Endothelial cell of umbilical vein (primary cell): ENCODE measurements at regions of chr4 and their contacts with region 1.

Region 1: GRCh38 chr4:41214136-41214824 is at the start of gene APBB2:
- DNase-seq: peak; percentile 98
- H3K4me3 ChIP-seq: peak within 1 kb of the TSS; percentile 85 to 96 (median 86)
- H3K27ac ChIP-seq: peak within 1 kb of the TSS; percentile 49
- H3K4me1 ChIP-seq: peaks cover 38% of the 10 kb centered on the region
- H3K27me3 ChIP-seq: no peaks in the 10 kb centered on the region
- CTCF ChIP-seq: peak; percentile 52 to 83
- POLR2A ChIP-seq: peak; percentile 93
- total RNA-seq, gene APBB2: 124 and 162 TPM in 2 replicates

Region 2: GRCh38 chr4:40924096-40924792 is 290.0 kb before region 1 on chr4:
- CTCF ChIA-PET with region 1: interaction called, 76 read pairs
- POLR2A ChIA-PET with region 1: no interaction called
- dilution Hi-C with region 1: loop called (anchors 25 kb)
- intact Hi-C with region 1: loop called (anchors 1 kb)
- DNase-seq: peak; percentile 68
- H3K4me3 ChIP-seq: no peak overlapping the region
- H3K27ac ChIP-seq: no peak overlapping the region
- H3K4me1 ChIP-seq: no peaks in the 10 kb centered on the region
- H3K27me3 ChIP-seq: no peaks in the 10 kb centered on the region
- CTCF ChIP-seq: peak; percentile 90 to 94
- POLR2A ChIP-seq: no peak

Region 3: GRCh38 chr4:40976343-40976742 is 237.9 kb before region 1 on chr4:
- CTCF ChIA-PET with region 1: interaction called, 179 read pairs
- POLR2A ChIA-PET with region 1: no interaction called
- dilution Hi-C with region 1: no loop called
- intact Hi-C with region 1: loop called (anchors 1 kb)
- DNase-seq: peak; percentile 76
- H3K4me3 ChIP-seq: no peak overlapping the region
- H3K27ac ChIP-seq: peak overlapping the region; percentile 5
- H3K4me1 ChIP-seq: peaks cover 8% of the 10 kb centered on the region
- H3K27me3 ChIP-seq: no peaks in the 10 kb centered on the region
- CTCF ChIP-seq: peak; percentile 37 to 44
- POLR2A ChIP-seq: no peak

Region 4: GRCh38 chr4:41050866-41051775 is 163.2 kb before region 1 on chr4:
- CTCF ChIA-PET with region 1: interaction called, 3 read pairs
- POLR2A ChIA-PET with region 1: no interaction called
- dilution Hi-C with region 1: no loop called
- intact Hi-C with region 1: loop called (anchors 5 kb)
- DNase-seq: peak; percentile 53
- H3K4me3 ChIP-seq: no peak overlapping the region
- H3K27ac ChIP-seq: peak overlapping the region; percentile 49
- H3K4me1 ChIP-seq: peaks cover 20% of the 10 kb centered on the region
- H3K27me3 ChIP-seq: no peaks in the 10 kb centered on the region
- CTCF ChIP-seq: no peak
- POLR2A ChIP-seq: no peak

Region 5: DNA sequence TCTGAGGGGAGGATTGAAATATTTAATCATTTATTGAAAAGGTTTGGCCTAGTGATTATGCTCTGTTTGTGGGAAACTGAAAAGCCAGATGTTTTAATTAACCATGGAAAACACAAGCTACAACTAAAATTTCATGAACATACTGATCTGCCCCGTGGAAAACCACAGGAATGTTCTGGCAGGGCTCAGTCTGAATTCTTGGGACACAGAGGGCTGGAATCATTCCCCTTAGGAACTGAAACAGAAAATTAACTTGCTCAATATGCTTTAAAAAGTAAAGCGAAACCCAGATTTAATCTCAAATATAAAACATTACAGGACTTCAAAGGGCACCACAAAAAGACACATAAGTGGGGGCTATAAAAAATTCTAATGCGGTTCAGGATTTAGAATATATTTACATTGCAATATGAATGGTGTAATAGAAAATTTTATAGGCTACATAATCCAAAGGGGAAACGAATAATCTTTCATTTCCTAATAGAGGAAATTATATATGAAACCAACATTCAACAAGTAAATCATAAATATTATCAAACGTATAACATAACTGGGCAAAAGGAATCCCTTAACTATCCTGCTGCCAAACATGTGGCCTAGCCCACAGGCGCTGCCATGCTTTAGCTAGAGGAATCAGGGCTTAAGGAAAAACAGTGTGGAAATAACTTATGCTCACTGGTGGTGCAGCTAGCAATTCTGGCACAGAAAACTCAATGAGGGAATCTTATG is 70.8 kb before region 1 on chr4:
- CTCF ChIA-PET with region 1: interaction called, 12 read pairs
- POLR2A ChIA-PET with region 1: no interaction called
- dilution Hi-C with region 1: no loop called
- intact Hi-C with region 1: loop called (anchors 2 kb)
- DNase-seq: peak; percentile 62
- H3K4me3 ChIP-seq: no peak overlapping the region
- H3K27ac ChIP-seq: peak overlapping the region; percentile 87
- H3K4me1 ChIP-seq: peaks cover 59% of the 10 kb centered on the region
- H3K27me3 ChIP-seq: no peaks in the 10 kb centered on the region
- CTCF ChIP-seq: no peak
- POLR2A ChIP-seq: no peak

Region 6: DNA sequence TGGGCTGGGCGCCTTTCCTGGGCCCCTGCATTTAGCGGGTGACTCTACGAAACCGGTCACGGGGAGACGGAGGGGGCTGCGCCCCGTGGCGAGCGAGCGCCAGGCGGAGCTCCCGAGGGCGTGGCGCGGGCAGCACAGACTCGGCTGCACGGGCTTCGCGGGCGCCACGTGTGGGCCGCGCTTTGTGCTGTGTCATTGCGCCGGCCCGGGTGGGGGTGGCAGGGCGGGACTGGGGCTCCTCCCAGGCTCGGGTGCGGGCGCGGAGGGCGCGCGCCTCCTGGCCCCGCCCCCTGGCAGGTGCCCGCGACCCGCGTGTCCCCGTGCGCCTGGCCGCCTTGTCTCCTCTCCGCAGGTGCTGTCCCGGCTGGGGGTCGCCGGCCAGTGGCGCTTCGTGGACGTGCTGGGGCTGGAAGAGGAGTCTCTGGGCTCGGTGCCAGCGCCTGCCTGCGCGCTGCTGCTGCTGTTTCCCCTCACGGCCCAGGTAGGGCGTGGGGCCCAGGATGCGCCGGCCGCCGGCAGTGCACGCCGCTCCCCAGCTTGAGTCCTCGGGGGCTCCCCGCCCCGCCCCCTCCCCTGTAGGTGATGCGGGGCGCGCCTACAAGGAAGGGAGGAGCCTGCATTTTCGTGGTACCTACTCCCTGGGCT is 43.1 kb after region 1 on chr4:
- CTCF ChIA-PET with region 1: interaction called, 4 read pairs
- POLR2A ChIA-PET with region 1: interaction called, 6 read pairs
- dilution Hi-C with region 1: no loop called
- intact Hi-C with region 1: loop called (anchors 5 kb)
- DNase-seq: peak; percentile 36
- H3K4me3 ChIP-seq: peak overlapping the region; percentile 35 to 54 (median 48)
- H3K27ac ChIP-seq: peak overlapping the region; percentile 0
- H3K4me1 ChIP-seq: peaks cover 12% of the 10 kb centered on the region
- H3K27me3 ChIP-seq: peaks cover 14 to 15% of the 10 kb centered on the region in 2 experiments
- CTCF ChIP-seq: no peak
- POLR2A ChIP-seq: no peak

Region 7: GRCh38 chr4:41281038-41281634 is 66.9 kb after region 1 on chr4:
- CTCF ChIA-PET with region 1: no interaction called
- POLR2A ChIA-PET with region 1: no interaction called
- dilution Hi-C with region 1: no loop called
- intact Hi-C with region 1: no loop called
- DNase-seq: peak; percentile 87
- H3K4me3 ChIP-seq: no peak overlapping the region
- H3K27ac ChIP-seq: no peak overlapping the region
- H3K4me1 ChIP-seq: no peaks in the 10 kb centered on the region
- H3K27me3 ChIP-seq: peaks cover 0 to 1% of the 10 kb centered on the region in 2 experiments
- CTCF ChIP-seq: peak; percentile 53 to 77
- POLR2A ChIP-seq: no peak

Region 8: GRCh38 chr4:41339812-41340809 is 125.8 kb after region 1 on chr4:
- CTCF ChIA-PET with region 1: no interaction called
- POLR2A ChIA-PET with region 1: no interaction called
- dilution Hi-C with region 1: no loop called
- intact Hi-C with region 1: no loop called
- DNase-seq: peak; percentile 85
- H3K4me3 ChIP-seq: no peak overlapping the region
- H3K27ac ChIP-seq: no peak overlapping the region
- H3K4me1 ChIP-seq: no peaks in the 10 kb centered on the region
- H3K27me3 ChIP-seq: no peaks in the 10 kb centered on the region
- CTCF ChIP-seq: peak in 1 of 2 donors; percentile 17
- POLR2A ChIP-seq: no peak

Region 9: DNA sequence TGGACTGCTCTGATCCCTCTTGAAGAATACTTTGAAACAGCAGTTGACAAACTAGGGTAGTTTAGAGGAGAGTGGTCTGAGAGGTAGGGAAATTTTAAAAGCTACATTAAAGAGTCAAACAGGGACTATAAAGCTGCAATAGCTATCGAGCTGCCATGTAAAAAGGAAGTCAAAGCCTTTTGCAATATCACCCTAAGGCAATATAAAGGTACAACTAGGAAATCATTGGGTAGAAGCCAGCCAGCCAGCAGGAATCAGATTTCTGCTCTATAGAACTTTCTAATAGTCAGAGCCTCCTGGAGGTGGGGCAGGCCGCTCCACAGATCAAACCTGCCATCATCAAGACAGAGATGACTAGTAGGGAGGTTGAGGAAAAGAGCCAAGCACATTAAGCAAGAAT is 549.4 kb after region 1 on chr4:
- CTCF ChIA-PET with region 1: no interaction called
- POLR2A ChIA-PET with region 1: no interaction called
- dilution Hi-C with region 1: no loop called
- intact Hi-C with region 1: no loop called
- DNase-seq: no peak
- H3K4me3 ChIP-seq: no peak overlapping the region
- H3K27ac ChIP-seq: no peak overlapping the region
- H3K4me1 ChIP-seq: no peaks in the 10 kb centered on the region
- H3K27me3 ChIP-seq: peaks cover 18 to 30% of the 10 kb centered on the region in 2 experiments
- CTCF ChIP-seq: no peak
- POLR2A ChIP-seq: no peak

Region 10: DNA sequence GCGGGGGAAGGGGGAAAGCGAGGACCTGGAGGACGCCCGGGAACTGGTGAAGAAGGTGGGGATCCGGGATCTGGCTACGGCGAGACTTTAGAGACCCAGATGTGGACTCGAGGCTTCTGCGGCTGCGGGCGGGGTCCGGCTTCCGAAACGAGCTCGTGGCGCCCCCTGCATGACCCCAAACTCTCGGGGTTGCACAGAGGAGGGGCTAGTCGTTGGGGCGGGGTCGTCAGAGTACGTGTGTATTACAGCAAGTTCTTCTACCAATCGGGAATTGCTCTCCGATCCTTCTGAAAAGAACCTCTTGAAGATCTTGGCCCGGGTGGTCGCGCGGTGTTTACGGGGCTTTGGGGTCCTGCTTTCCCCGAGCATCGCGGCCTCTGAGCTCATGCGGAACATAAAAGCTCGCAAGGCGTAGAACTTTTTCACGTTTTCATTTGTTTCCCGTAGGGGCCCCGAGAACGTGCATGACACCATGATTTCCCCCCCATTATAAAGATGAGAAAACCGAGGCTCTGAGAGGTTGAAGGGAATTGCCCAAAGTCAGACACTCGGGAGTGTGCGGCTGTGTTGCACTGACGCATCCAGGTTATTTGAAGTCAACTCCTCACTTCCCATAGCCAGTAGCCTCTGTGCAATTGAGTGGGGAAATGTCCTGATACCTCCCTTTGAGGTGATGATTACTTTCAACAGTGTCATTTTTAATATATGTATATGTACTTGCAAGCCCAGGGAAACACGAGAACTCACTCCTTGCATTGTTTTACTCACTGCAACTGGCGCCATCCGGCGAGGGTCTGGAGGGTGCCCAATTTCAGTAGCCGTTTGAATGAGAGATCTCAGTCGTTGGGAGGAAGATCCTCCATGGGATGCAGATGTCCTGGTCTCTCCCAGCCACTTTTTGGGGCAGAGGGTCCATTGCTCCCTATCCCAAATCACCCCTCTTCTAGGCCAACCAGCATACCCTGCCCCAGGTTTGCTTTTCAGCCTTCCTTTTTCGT is 938.5 kb after region 1 on chr4 and contains the start of gene BEND4:
- CTCF ChIA-PET with region 1: no interaction called
- POLR2A ChIA-PET with region 1: no interaction called
- dilution Hi-C with region 1: no loop called
- intact Hi-C with region 1: no loop called
- DNase-seq: no peak
- H3K4me3 ChIP-seq: peak within 1 kb of the TSS; percentile 16 to 28 (median 27)
- H3K27ac ChIP-seq: no peak within 1 kb of the TSS
- H3K4me1 ChIP-seq: peaks cover 7% of the 10 kb centered on the region
- H3K27me3 ChIP-seq: peaks cover 42 to 67% of the 10 kb centered on the region in 2 experiments
- CTCF ChIP-seq: no peak
- POLR2A ChIP-seq: no peak
- total RNA-seq, gene BEND4: 0.07 and 0.27 TPM in 2 replicates